AG04450 (cell line): ENCODE measurements at regions of chr17 and their contacts with region 1.

Region 1: DNA sequence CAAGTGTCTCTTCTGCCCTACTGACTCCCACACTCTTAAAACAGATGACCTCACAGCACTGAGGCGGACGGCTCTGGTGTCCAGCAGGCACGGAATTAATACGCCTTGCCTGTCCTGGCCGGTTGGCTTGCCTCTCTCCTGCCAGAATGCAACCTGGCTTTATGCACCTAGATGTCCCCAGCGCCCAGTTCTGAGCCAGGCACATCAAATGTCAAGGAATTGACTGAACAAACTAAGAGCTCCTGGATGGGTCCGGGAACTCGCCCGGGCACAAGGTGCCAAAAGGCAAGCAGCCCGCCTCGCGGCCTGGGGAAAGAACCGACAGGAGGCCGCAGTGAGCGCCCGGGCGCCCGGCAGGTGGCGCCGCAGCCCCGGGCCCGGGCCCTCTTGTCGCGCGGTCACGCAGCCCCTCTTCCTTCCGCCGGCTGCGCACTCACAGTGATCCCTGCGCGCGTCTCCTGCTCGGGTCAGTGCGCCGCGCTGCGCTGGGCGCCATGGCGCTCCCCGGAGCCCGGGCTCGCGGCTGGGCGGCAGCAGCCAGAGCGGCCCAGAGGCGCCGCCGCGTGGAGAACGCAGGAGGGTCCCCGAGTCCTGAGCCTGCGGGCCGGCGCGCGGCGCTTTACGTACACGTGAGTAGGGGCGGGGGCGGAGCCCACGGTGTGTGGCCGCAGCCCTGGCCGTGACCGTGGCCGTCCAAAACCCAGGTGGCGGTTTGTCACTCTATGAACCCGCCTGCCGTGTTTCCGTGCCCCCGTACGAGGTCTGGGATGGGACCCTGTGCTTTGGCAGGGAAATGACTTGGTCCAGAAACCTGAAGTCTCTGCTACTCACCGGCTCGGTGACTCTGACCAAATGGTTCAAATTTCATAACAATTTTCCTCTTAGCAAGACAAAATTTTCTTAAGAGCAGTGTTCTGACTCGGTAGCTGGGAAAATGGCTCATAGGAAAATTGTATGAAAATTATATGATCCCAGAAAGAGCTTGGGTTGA is at the start of gene RSAD1:
- DNase-seq: peak; percentile 48
- H3K4me3 ChIP-seq: peak within 1 kb of the TSS; percentile 88
- H3K27ac ChIP-seq: peak within 1 kb of the TSS; percentile 73
- H3K27me3 ChIP-seq: no peaks in the 10 kb centered on the region
- CTCF ChIP-seq: peak; percentile 66
- polyA plus RNA-seq, gene RSAD1: 15.5 and 17.5 TPM in 2 replicates

Region 2: GRCh38 chr17:50448643-50449042 is 30.0 kb before region 1 on chr17:
- CTCF ChIA-PET with region 1: no interaction called
- POLR2A ChIA-PET with region 1: no interaction called
- DNase-seq: no peak
- H3K4me3 ChIP-seq: no peak overlapping the region
- H3K27ac ChIP-seq: no peak overlapping the region
- H3K27me3 ChIP-seq: no peaks in the 10 kb centered on the region
- CTCF ChIP-seq: no peak

Region 3: GRCh38 chr17:50501054-50501453 is 22.4 kb after region 1 on chr17:
- CTCF ChIA-PET with region 1: interaction called, 22 read pairs
- POLR2A ChIA-PET with region 1: interaction called, 3 read pairs
- DNase-seq: no peak
- H3K4me3 ChIP-seq: no peak overlapping the region
- H3K27ac ChIP-seq: no peak overlapping the region
- H3K27me3 ChIP-seq: peaks cover 3% of the 10 kb centered on the region
- CTCF ChIP-seq: peak; percentile 45

Region 4: GRCh38 chr17:50507871-50508572 is 29.3 kb after region 1 on chr17 and contains the start of gene MYCBPAP:
- CTCF ChIA-PET with region 1: interaction called, 11 read pairs
- POLR2A ChIA-PET with region 1: no interaction called
- DNase-seq: peak; percentile 16
- H3K4me3 ChIP-seq: peak within 1 kb of the TSS; percentile 49
- H3K27ac ChIP-seq: peak within 1 kb of the TSS; percentile 11
- H3K27me3 ChIP-seq: peaks cover 6% of the 10 kb centered on the region
- CTCF ChIP-seq: 0 out of 2 replicates have a peak, but pooled peaks have one; percentile 6
- polyA plus RNA-seq, gene MYCBPAP: 0.11 and 0.17 TPM in 2 replicates

Region 5: DNA sequence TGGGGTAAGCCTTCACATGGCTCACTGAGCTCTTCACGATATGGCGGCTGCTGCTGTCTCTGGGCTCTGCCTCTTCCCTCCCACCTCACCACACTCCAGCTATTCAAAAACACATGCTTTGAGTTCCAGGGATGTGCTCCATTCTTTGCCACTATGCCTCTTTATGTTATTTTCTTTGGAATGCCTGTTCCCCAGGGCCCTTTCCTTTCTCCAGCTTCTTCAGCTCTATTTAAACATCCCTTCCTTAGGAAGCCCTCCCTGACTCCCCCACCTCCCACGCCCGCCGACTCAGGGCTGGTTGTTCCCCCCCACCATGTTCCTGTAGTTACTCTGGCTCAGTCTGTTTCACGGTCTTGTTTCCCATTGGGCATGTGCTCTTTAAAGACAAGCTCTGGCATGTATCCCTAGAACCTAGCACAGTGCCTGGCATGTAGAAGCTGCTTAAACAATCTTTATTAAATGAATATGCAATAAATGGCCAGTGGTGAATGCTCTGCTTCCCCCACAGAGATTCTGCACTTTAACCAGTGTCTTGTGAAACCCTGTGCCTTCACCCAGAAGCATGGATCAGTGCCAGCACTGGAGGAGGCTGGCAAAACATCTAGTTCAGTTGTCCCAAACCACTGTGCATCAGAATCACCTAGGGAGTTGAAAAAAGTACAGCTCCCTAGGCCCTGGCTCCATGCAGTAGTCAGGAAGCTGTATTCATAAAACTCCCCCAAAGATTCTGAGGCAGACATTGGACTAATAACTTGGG is 36.4 kb after region 1 on chr17:
- CTCF ChIA-PET with region 1: interaction called, 11 read pairs
- POLR2A ChIA-PET with region 1: no interaction called
- DNase-seq: no peak
- H3K4me3 ChIP-seq: no peak overlapping the region
- H3K27ac ChIP-seq: no peak overlapping the region
- H3K27me3 ChIP-seq: peaks cover 11% of the 10 kb centered on the region
- CTCF ChIP-seq: no peak